Naive thymus-derived CD4-positive, alpha-beta T cell (primary cell): ENCODE measurements at regions of chr5 and their contacts with region 1.

Region 1: DNA sequence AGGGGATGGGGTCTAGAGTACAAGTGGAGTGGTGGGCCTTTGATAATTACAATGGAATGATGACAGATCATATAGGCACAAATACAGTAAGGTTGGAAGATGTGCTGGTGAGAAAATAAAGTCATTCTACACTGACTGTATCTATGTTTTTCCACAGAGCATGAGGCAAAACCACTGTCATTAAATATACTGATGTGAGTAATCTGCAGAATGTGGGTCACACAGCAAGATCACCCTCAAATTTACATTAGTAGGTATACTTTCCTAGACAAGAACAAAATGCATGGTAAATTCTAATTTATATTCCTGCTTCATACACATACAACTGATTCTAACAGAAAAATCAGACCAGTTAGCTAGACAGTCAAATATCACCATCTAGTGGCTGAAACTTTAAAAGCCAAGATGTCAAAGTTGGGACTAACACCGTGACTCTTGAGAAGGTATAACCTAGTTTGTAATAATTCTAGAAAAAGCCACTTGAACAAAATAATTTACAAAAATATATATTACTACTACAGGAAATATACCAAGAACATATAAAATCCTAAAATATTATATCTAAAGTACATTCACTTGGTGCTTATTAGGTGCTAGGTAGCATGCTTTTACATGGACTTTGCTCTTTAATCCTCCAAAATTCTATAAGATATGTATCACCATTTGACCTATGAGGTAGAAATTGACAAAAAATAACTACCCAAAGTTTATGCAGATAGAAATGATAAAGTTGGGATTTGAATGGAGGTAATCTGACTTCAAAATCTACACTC is 19.5 kb downstream of the TTC33 start:
- DNase-seq: peak in 7 of 9 donors; percentile 26 to 60 (median 52)
- ATAC-seq: peak; percentile 81
- H3K4me3 ChIP-seq: no peak overlapping the region
- H3K4me3 Mint-ChIP-seq: no peak overlapping the region
- H3K27ac ChIP-seq: no peak overlapping the region
- H3K27ac Mint-ChIP-seq: no peak overlapping the region
- H3K4me1 ChIP-seq: no peaks in the 10 kb centered on the region
- H3K4me1 Mint-ChIP-seq: peaks cover 18 to 33% (median 24%) of the 10 kb centered on the region in 7 donors
- H3K27me3 ChIP-seq: no peaks in the 10 kb centered on the region
- H3K27me3 Mint-ChIP-seq: no peaks in the 10 kb centered on the region

Region 2: DNA sequence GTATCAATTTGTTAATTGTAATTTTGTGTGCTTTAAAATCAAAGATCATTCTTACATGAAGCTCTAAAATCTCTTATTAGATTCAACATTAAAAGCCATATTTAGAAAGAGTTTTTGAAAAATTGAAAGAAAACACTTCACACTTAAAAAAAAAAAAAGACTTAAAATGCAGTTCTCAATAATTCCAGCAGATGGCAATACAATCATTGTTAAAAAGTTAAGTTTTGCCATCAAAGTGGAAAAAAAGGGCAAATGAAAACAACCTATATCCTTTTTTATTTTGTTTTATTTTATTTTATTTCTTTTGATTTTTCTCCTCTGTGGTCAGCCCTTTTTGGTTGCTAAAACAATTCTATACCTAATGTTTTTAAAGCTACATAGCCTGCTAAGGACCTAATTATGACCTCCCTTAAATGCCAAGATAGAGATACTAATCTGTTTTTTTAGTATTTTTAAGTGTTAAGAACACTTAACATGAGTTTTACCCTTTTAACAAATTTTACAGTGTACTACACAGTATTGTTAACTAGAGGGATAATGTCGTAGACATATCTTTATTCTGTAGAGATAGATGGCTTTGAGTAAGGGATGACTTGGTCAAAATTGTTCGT is 1157.3 kb before region 1 on chr5:
- CTCF ChIA-PET with region 1: interaction called, 3 read pairs
- POLR2A ChIA-PET with region 1: no interaction called
- intact Hi-C with region 1: loop called (anchors 1 kb)
- DNase-seq: peak in 6 of 9 donors; percentile 2 to 31 (median 18)
- ATAC-seq: no peak
- H3K4me3 ChIP-seq: no peak overlapping the region
- H3K4me3 Mint-ChIP-seq: no peak overlapping the region
- H3K27ac ChIP-seq: no peak overlapping the region
- H3K27ac Mint-ChIP-seq: no peak overlapping the region
- H3K4me1 ChIP-seq: peaks cover 0 to 9% of the 10 kb centered on the region in 2 donors
- H3K4me1 Mint-ChIP-seq: peaks cover 6 to 17% (median 8%) of the 10 kb centered on the region in 7 donors
- H3K27me3 ChIP-seq: no peaks in the 10 kb centered on the region
- H3K27me3 Mint-ChIP-seq: peaks cover 0 to 23% (median 0%) of the 10 kb centered on the region in 5 donors

Region 3: GRCh38 chr5:39714036-39714698 is 1022.1 kb before region 1 on chr5:
- CTCF ChIA-PET with region 1: interaction called, 8 read pairs
- POLR2A ChIA-PET with region 1: no interaction called
- intact Hi-C with region 1: loop called (anchors 1 kb)
- DNase-seq: peak in 7 of 9 donors; percentile 4 to 51 (median 33)
- ATAC-seq: peak; percentile 63
- H3K4me3 ChIP-seq: no peak overlapping the region
- H3K4me3 Mint-ChIP-seq: no peak overlapping the region
- H3K27ac ChIP-seq: no peak overlapping the region
- H3K27ac Mint-ChIP-seq: no peak overlapping the region
- H3K4me1 ChIP-seq: no peaks in the 10 kb centered on the region
- H3K4me1 Mint-ChIP-seq: no peaks in the 10 kb centered on the region
- H3K27me3 ChIP-seq: no peaks in the 10 kb centered on the region
- H3K27me3 Mint-ChIP-seq: peaks cover 2 to 12% (median 9%) of the 10 kb centered on the region in 5 donors

Region 4: GRCh38 chr5:40165794-40166728 is 570.2 kb before region 1 on chr5:
- CTCF ChIA-PET with region 1: no interaction called
- POLR2A ChIA-PET with region 1: no interaction called
- intact Hi-C with region 1: loop called (anchors 2 to 5 kb)
- DNase-seq: peak in 1 of 9 donors; percentile 1
- ATAC-seq: no peak
- H3K4me3 ChIP-seq: no peak overlapping the region
- H3K4me3 Mint-ChIP-seq: no peak overlapping the region
- H3K27ac ChIP-seq: no peak overlapping the region
- H3K27ac Mint-ChIP-seq: no peak overlapping the region
- H3K4me1 ChIP-seq: no peaks in the 10 kb centered on the region
- H3K4me1 Mint-ChIP-seq: peaks cover 0 to 6% (median 0%) of the 10 kb centered on the region in 7 donors
- H3K27me3 ChIP-seq: no peaks in the 10 kb centered on the region
- H3K27me3 Mint-ChIP-seq: no peaks in the 10 kb centered on the region

Region 5: GRCh38 chr5:40502736-40503135 is 233.6 kb before region 1 on chr5:
- CTCF ChIA-PET with region 1: no interaction called
- POLR2A ChIA-PET with region 1: no interaction called
- intact Hi-C with region 1: loop called (anchors 1 to 5 kb)
- DNase-seq: no peak
- ATAC-seq: no peak
- H3K4me3 ChIP-seq: no peak overlapping the region
- H3K4me3 Mint-ChIP-seq: no peak overlapping the region
- H3K27ac ChIP-seq: no peak overlapping the region
- H3K27ac Mint-ChIP-seq: no peak overlapping the region
- H3K4me1 ChIP-seq: no peaks in the 10 kb centered on the region
- H3K4me1 Mint-ChIP-seq: peaks cover 5 to 14% (median 6%) of the 10 kb centered on the region in 7 donors
- H3K27me3 ChIP-seq: no peaks in the 10 kb centered on the region
- H3K27me3 Mint-ChIP-seq: no peaks in the 10 kb centered on the region

Region 6: GRCh38 chr5:40879163-40879942 is 143.1 kb after region 1 on chr5:
- CTCF ChIA-PET with region 1: no interaction called
- POLR2A ChIA-PET with region 1: no interaction called
- intact Hi-C with region 1: loop called (anchors 1 kb)
- DNase-seq: peak in 5 of 9 donors; percentile 23 to 39 (median 29)
- ATAC-seq: peak; percentile 45
- H3K4me3 ChIP-seq: no peak overlapping the region
- H3K4me3 Mint-ChIP-seq: no peak overlapping the region
- H3K27ac ChIP-seq: no peak overlapping the region
- H3K27ac Mint-ChIP-seq: no peak overlapping the region
- H3K4me1 ChIP-seq: no peaks in the 10 kb centered on the region
- H3K4me1 Mint-ChIP-seq: peaks cover 0 to 5% (median 0%) of the 10 kb centered on the region in 7 donors
- H3K27me3 ChIP-seq: no peaks in the 10 kb centered on the region
- H3K27me3 Mint-ChIP-seq: peaks cover 0 to 9% (median 0%) of the 10 kb centered on the region in 5 donors